ENCODE measurements at regions of chr10 and their contacts with region 1.

Region 1: DNA sequence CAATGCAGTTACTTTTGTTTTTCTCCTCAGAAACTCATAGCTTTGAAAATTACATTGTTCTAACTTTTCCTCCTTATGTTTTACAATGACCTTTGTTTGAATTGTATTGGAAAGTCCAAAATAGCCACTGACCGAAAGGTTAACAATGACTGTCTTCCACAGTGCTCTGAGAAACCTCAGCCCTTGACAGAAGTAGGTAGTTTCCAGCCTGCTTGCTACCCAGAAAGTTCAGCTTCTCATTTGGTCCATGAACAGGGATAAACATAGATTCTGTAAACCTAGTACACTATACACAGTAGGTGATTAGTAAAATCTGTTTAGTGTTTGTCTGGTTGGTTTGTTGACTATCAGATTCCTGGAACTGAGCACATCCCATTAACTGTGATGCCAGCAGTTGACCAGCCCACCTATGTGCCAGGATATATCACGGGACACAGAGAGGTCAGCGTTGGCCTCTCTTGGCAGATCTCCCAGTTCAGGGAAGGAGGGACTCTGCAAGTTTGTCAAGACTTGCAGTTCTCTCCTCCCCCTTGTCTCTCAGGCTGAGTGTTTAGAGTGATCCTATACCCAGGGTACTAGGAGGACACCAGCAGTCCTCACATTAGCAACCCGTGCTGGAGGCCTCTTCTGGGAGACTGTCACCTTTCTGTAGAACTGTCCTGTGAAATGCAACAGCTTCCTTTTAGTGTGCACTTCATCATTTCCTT is 297.6 kb downstream of the ARHGAP12 start:
- DNase-seq: no peak
- ATAC-seq: peak; percentile 91

Region 2: GRCh38 chr10:31490858-31491504 is 140.0 kb before region 1 on chr10:
- intact Hi-C with region 1: no loop called
- DNase-seq: no peak
- ATAC-seq: peak; percentile 61

Region 3: GRCh38 chr10:31536302-31536701 is 94.7 kb before region 1 on chr10:
- intact Hi-C with region 1: no loop called
- DNase-seq: no peak
- ATAC-seq: peak; percentile 31

Region 4: DNA sequence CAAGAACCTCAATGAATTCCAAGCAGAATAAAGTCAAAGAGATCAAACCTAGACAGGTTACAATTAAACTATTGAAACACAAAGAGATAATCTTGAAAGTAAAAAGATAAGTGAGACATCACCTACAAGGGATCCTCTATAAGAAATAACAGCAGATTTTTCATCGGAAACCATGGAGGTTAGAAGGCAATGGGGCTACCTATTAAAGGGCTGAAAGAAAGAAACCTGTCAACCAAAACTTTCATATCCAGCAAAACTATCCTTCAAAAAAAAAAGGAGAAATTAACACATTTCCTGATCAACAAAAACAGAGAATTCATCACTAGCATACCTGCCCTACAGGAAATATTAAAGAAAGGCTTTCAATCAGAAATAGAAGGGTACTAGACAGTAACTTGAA is 52.7 kb after region 1 on chr10:
- intact Hi-C with region 1: loop called (anchors 5 kb)
- DNase-seq: no peak
- ATAC-seq: no peak